ENCODE measurements at regions of chr1 and their contacts with region 1.

Region 1: GRCh38 chr1:23619299-23620188 is 60.2 kb upstream of the ID3 start:
- DNase-seq: no peak
- H3K4me3 ChIP-seq: peak overlapping the region; percentile 57 to 60
- H3K27ac ChIP-seq: no peak overlapping the region
- H3K4me1 ChIP-seq: peaks cover 0 to 6% of the 10 kb centered on the region in 2 donors
- H3K27me3 ChIP-seq: no peaks in the 10 kb centered on the region
- CTCF ChIP-seq: no peak

Region 2: GRCh38 chr1:23407016-23407634 is 212.4 kb before region 1 on chr1:
- intact Hi-C with region 1: no loop called
- DNase-seq: no peak
- H3K4me3 ChIP-seq: no peak overlapping the region
- H3K27ac ChIP-seq: peak overlapping the region; percentile 20 to 29
- H3K4me1 ChIP-seq: peaks cover 3 to 28% of the 10 kb centered on the region in 2 donors
- H3K27me3 ChIP-seq: no peaks in the 10 kb centered on the region
- CTCF ChIP-seq: no peak

Region 3: DNA sequence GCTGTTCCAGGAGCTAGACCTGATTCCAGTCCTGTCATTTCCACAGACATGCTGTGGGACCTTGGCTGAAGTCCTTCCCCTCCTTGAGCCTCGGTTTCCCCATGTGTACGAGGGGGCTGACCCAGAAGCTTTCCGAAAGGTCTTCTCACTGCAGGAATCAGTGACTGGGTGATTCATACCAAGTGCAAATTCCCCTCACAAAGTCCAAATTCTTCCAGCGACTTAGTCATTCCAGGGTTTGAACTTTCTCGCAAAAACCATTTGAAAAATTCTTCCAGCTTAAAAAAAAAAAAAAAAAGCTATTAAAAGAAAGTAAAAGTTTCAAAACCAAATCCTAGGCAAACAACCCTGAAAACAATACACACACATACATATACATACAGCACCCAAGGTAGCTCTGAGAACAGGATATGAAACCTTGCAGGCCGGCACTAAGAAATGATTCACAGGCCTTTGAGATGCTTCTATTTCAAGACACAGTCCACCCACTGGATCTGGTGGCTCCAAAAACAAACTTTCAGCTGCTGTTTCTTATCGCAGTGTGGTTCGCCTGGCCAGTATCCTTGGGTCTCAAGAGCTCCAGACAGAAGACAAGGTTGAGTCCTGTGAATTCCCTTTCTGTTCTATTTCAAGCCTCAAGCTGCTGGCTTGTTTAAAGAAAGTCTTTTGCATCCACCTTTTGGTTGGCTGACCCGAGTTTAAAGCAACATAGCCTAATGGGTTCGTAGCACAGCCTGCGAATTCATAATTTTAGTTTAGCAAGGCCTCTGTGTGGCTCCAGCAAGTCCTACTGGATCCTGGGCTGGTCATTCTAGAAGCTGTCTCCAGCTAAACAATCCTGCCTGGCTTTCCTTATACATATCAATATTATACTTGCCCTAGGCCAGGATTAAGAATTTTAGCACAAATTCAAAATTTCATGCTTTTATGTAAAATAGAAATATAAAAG is 42.2 kb before region 1 on chr1:
- intact Hi-C with region 1: loop called (anchors 5 kb)
- DNase-seq: peak; percentile 18 to 88
- H3K4me3 ChIP-seq: peak overlapping the region; percentile 31 to 64
- H3K27ac ChIP-seq: peak overlapping the region; percentile 93 to 94
- H3K4me1 ChIP-seq: peaks cover 22 to 38% of the 10 kb centered on the region in 2 donors
- H3K27me3 ChIP-seq: no peaks in the 10 kb centered on the region
- CTCF ChIP-seq: no peak

Measured in ascending aorta (tissue), 2 donors.